ENCODE measurements at regions of chr9 and their contacts with region 1.

Region 1: GRCh38 chr9:135655337-135655736 is 7.8 kb upstream of the LCN9 start:
- DNase-seq: no peak
- H3K4me3 ChIP-seq: no peak overlapping the region
- CTCF ChIP-seq: no peak

Region 2: DNA sequence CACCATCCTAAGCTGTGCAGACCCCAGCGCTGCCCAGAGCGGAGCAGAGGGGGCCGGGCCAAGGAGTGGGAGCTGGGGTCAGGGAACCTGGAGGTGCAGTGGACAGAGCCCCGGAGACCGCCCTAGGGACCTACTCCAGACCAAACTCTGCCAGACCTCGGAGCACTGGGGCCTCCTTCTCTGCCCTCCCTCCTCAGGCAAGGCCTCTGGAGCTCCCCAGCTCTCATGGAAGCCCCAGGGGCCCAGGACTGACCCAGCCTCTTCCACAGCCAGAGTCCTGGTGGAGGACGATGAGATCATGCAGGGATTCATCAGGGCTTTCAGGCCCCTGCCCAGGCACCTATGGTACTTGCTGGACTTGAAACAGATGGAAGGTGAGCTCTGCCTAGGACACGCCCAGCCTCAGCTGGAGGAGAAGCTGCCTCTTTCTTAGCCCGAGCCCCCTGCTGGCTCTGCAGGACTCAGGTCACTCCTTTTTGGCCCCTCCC is 90.2 kb before region 1 on chr9:
- in situ Hi-C with region 1: loop called (anchors 5 kb)
- DNase-seq: no peak
- H3K4me3 ChIP-seq: no peak overlapping the region
- CTCF ChIP-seq: no peak